T-cell (primary cell): ENCODE measurements at regions of chr20 and their contacts with region 1.

Region 1: DNA sequence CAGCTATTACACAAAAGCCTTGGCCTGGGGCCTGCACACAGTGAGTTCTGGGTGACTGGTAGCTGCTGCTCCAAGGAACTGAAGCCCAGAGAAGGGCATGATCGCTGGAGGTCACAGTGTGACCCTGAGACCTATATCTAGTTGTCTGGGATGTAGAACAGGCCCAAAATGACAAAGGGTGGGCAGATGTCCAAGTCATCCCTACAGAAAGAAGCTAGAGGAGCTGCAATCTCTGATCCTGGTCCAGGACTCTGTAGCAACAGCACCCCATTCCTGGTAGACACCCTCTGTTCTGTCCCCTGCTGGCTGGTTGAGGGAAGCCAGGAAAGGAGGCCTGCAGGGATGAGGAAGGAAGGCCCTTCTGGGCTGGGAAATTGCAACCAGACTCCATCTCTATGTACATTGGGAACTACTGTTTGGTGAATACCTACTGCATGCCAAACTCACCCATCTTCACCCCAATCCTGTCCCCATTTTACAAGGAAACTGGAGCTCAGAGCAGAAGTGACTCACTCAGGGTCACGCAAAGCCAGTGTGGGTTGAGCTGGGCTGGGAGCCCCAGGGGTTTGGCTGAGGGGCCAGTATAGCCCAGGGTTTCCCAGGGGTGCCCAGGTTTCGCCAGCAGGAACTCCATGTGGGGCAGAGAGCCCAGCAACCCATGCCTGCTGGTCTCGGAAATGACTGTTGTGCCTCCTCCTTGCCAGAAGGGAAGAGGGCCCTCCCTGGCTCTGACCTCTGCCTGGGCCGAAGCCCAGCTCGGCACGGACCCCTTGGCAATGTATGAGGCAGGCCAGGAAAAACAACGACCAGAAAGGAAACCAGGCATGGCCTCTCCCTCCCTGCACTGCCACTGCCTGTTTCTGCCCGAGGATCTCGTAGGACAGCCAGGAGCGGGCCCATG is 44.9 kb upstream of the TLDC2 start:
- DNase-seq: no peak
- ATAC-seq: no peak
- H3K4me3 ChIP-seq: no peak overlapping the region
- H3K4me3 Mint-ChIP-seq: no peak overlapping the region
- H3K27ac ChIP-seq: no peak overlapping the region
- H3K27ac Mint-ChIP-seq: no peak overlapping the region
- H3K4me1 ChIP-seq: peaks cover 0 to 11% of the 10 kb centered on the region in 2 experiments
- H3K4me1 Mint-ChIP-seq: peaks cover 5 to 13% (median 7%) of the 10 kb centered on the region in 3 donors
- H3K27me3 ChIP-seq: no peaks in the 10 kb centered on the region
- H3K27me3 Mint-ChIP-seq: no peaks in the 10 kb centered on the region

Region 2: GRCh38 chr20:36541227-36541763 is 289.7 kb before region 1 on chr20 and contains the start of gene MYL9:
- CTCF ChIA-PET with region 1: interaction called in 1 of 2 experiments, 15 read pairs
- POLR2A ChIA-PET with region 1: no interaction called
- DNase-seq: peak in 4 of 35 experiments; percentile 7 to 32 (median 18)
- ATAC-seq: peak in 1 of 4 experiments; percentile 16
- H3K4me3 ChIP-seq: no peak within 1 kb of the TSS
- H3K4me3 Mint-ChIP-seq: peak within 1 kb of the TSS in 1 of 3 donors; percentile 16
- H3K27ac ChIP-seq: no peak within 1 kb of the TSS
- H3K27ac Mint-ChIP-seq: no peak within 1 kb of the TSS
- H3K4me1 ChIP-seq: peaks cover 0 to 8% of the 10 kb centered on the region in 2 experiments
- H3K4me1 Mint-ChIP-seq: peaks cover 0 to 3% (median 2%) of the 10 kb centered on the region in 3 donors
- H3K27me3 ChIP-seq: peaks cover 0 to 17% of the 10 kb centered on the region in 2 experiments
- H3K27me3 Mint-ChIP-seq: peaks cover 0 to 6% of the 10 kb centered on the region in 2 donors
- total RNA-seq, gene MYL9: 1.3 to 2.8 (median 1.7) TPM in 4 of 5 donors, not detected in the other

Region 3: DNA sequence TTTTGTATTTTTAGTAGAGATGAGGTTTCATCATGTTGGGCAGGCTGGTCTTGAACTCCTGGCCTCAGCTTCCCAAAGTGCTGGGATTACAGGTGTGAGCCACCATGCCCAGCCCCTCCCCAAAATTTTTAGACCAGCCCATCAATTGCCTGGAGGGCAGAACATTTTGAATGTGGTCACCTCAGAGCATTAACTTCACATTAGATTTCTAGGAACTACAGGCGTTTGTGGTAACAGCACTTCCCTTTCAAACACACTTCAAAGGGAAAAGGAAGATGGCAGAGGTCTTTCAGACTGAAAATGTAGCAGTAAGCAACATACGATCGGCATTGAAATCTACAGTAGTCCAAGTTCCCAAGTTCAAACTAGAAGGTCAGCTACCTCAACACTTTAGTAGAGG is 172.7 kb before region 1 on chr20:
- CTCF ChIA-PET with region 1: no interaction called
- POLR2A ChIA-PET with region 1: no interaction called
- DNase-seq: peak in 1 of 35 experiments; percentile 54
- ATAC-seq: peak; percentile 64 to 90 (median 83)
- H3K4me3 ChIP-seq: peak overlapping the region in 1 of 2 donors; percentile 8
- H3K4me3 Mint-ChIP-seq: peak overlapping the region; percentile 41 to 67 (median 43)
- H3K27ac ChIP-seq: no peak overlapping the region
- H3K27ac Mint-ChIP-seq: peak overlapping the region; percentile 7 to 60
- H3K4me1 ChIP-seq: peaks cover 10 to 11% of the 10 kb centered on the region in 2 experiments
- H3K4me1 Mint-ChIP-seq: peaks cover 18 to 23% (median 22%) of the 10 kb centered on the region in 3 donors
- H3K27me3 ChIP-seq: no peaks in the 10 kb centered on the region
- H3K27me3 Mint-ChIP-seq: no peaks in the 10 kb centered on the region

Region 4: GRCh38 chr20:36854350-36855240 is 23.6 kb after region 1 on chr20:
- CTCF ChIA-PET with region 1: no interaction called
- POLR2A ChIA-PET with region 1: interaction called, 4 to 10 read pairs
- DNase-seq: no peak
- ATAC-seq: no peak
- H3K4me3 ChIP-seq: no peak overlapping the region
- H3K4me3 Mint-ChIP-seq: no peak overlapping the region
- H3K27ac ChIP-seq: no peak overlapping the region
- H3K27ac Mint-ChIP-seq: no peak overlapping the region
- H3K4me1 ChIP-seq: peaks cover 6 to 18% of the 10 kb centered on the region in 2 experiments
- H3K4me1 Mint-ChIP-seq: peaks cover 15 to 21% (median 17%) of the 10 kb centered on the region in 3 donors
- H3K27me3 ChIP-seq: peaks cover 0 to 7% of the 10 kb centered on the region in 2 experiments
- H3K27me3 Mint-ChIP-seq: no peaks in the 10 kb centered on the region